ENCODE measurements at regions of chr17 and their contacts with region 1.

Region 1: DNA sequence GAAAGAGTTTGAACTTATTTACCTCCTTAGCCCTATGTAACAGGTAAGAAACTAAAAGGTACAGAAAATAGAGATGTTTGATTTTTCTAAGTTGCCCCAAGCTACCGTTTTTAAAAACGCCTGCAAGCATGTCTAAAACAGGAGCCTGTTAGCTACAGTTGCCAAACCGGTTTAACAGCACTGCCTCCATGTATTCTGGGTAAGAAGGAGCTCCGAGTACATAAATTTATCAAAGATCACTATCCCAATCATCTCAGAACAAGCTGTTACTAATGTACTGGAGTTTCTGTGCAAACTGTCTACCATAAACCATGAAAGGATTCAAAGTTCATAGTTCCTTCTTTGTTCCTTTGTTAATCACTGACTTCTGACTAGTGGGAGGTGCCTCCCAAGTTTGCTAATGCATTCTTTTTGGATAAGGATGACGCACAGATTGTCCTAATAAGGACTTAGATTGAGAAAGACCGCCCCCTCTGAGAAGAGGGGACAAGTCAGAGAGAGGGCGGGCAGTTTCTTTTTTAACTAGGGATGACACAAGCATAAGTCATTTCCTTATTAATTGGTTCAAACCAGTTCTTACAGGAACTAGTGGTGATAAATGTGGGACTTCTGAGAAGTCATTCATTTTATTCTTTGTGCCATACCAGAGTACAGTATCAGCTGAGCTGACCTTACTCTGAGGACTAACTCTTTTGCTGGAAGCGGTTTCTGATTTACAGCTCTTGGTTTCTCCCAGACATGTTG is 55.3 kb downstream of the TUBD1 start:
- DNase-seq: peak; percentile 99
- ATAC-seq: peak; percentile 83
- H3K4me3 ChIP-seq: peak overlapping the region; percentile 87 to 99
- H3K27ac ChIP-seq: peak overlapping the region; percentile 100
- H3K4me1 ChIP-seq: peaks cover 30% of the 10 kb centered on the region
- H3K27me3 ChIP-seq: no peaks in the 10 kb centered on the region
- CTCF ChIP-seq: no peak

Region 2: GRCh38 chr17:58136669-58137283 is 1700.7 kb before region 1 on chr17:
- CTCF ChIA-PET with region 1: interaction called, 13 read pairs
- POLR2A ChIA-PET with region 1: no interaction called
- in situ Hi-C with region 1: no loop called
- intact Hi-C with region 1: no loop called
- DNase-seq: no peak
- ATAC-seq: peak; percentile 95
- H3K4me3 ChIP-seq: no peak overlapping the region
- H3K27ac ChIP-seq: no peak overlapping the region
- H3K4me1 ChIP-seq: no peaks in the 10 kb centered on the region
- H3K27me3 ChIP-seq: peaks cover 42% of the 10 kb centered on the region
- CTCF ChIP-seq: peak; percentile 82

Region 3: GRCh38 chr17:59490216-59490615 is 347.3 kb before region 1 on chr17:
- CTCF ChIA-PET with region 1: no interaction called
- POLR2A ChIA-PET with region 1: no interaction called
- in situ Hi-C with region 1: no loop called
- intact Hi-C with region 1: no loop called
- DNase-seq: no peak
- ATAC-seq: no peak
- H3K4me3 ChIP-seq: no peak overlapping the region
- H3K27ac ChIP-seq: no peak overlapping the region
- H3K4me1 ChIP-seq: no peaks in the 10 kb centered on the region
- H3K27me3 ChIP-seq: no peaks in the 10 kb centered on the region
- CTCF ChIP-seq: no peak

Region 4: GRCh38 chr17:59753522-59754467 is 83.7 kb before region 1 on chr17:
- CTCF ChIA-PET with region 1: no interaction called
- POLR2A ChIA-PET with region 1: interaction called, 77 read pairs
- in situ Hi-C with region 1: no loop called
- intact Hi-C with region 1: no loop called
- DNase-seq: peak; percentile 83
- ATAC-seq: peak; percentile 64
- H3K4me3 ChIP-seq: no peak overlapping the region
- H3K27ac ChIP-seq: peak overlapping the region; percentile 100
- H3K4me1 ChIP-seq: peaks cover 63% of the 10 kb centered on the region
- H3K27me3 ChIP-seq: no peaks in the 10 kb centered on the region
- CTCF ChIP-seq: peak; percentile 67; the same call in 1 of the 2 replicates

Region 5: GRCh38 chr17:59800530-59800942 is 36.9 kb before region 1 on chr17:
- CTCF ChIA-PET with region 1: interaction called, 3 read pairs
- POLR2A ChIA-PET with region 1: interaction called, 18 read pairs
- in situ Hi-C with region 1: no loop called
- intact Hi-C with region 1: no loop called
- DNase-seq: no peak
- ATAC-seq: peak; percentile 74
- H3K4me3 ChIP-seq: no peak overlapping the region
- H3K27ac ChIP-seq: peak overlapping the region; percentile 99
- H3K4me1 ChIP-seq: peaks cover 43% of the 10 kb centered on the region
- H3K27me3 ChIP-seq: no peaks in the 10 kb centered on the region
- CTCF ChIP-seq: no peak

Region 6: GRCh38 chr17:59853168-59853918 is 15.9 kb after region 1 on chr17:
- CTCF ChIA-PET with region 1: interaction called, 4 read pairs
- POLR2A ChIA-PET with region 1: interaction called, 19 read pairs
- in situ Hi-C with region 1: no loop called
- intact Hi-C with region 1: no loop called
- DNase-seq: peak; percentile 97
- ATAC-seq: peak; percentile 91
- H3K4me3 ChIP-seq: no peak overlapping the region
- H3K27ac ChIP-seq: peak overlapping the region; percentile 100
- H3K4me1 ChIP-seq: peaks cover 66% of the 10 kb centered on the region
- H3K27me3 ChIP-seq: no peaks in the 10 kb centered on the region
- CTCF ChIP-seq: peak; percentile 82